Body of pancreas (tissue), 4 donors: ENCODE measurements at regions of chr10 and their contacts with region 1.

Region 1: GRCh38 chr10:61284222-61284890 is 168.8 kb downstream of the TMEM26 start:
- DNase-seq: peak in 1 of 4 donors; percentile 14
- ATAC-seq: peak; percentile 77
- H3K4me3 ChIP-seq: no peak overlapping the region
- H3K27ac ChIP-seq: no peak overlapping the region
- H3K4me1 ChIP-seq: no peaks in the 10 kb centered on the region
- H3K27me3 ChIP-seq: no peaks in the 10 kb centered on the region
- CTCF ChIP-seq: peak; percentile 55 to 84 (median 78)
- POLR2A ChIP-seq: no peak

Region 2: GRCh38 chr10:60281331-60281730 is 1003.0 kb before region 1 on chr10:
- intact Hi-C with region 1: no loop called
- DNase-seq: no peak
- ATAC-seq: no peak
- H3K4me3 ChIP-seq: no peak overlapping the region
- H3K27ac ChIP-seq: no peak overlapping the region
- H3K4me1 ChIP-seq: peaks cover 20% of the 10 kb centered on the region
- H3K27me3 ChIP-seq: no peaks in the 10 kb centered on the region
- CTCF ChIP-seq: no peak
- POLR2A ChIP-seq: no peak

Region 3: GRCh38 chr10:60816628-60817397 is 467.5 kb before region 1 on chr10:
- intact Hi-C with region 1: loop called (anchors 5 kb)
- DNase-seq: peak; percentile 47 to 74 (median 58)
- ATAC-seq: peak; percentile 89
- H3K4me3 ChIP-seq: no peak overlapping the region
- H3K27ac ChIP-seq: no peak overlapping the region
- H3K4me1 ChIP-seq: peaks cover 3% of the 10 kb centered on the region
- H3K27me3 ChIP-seq: no peaks in the 10 kb centered on the region
- CTCF ChIP-seq: peak; percentile 40 to 90 (median 80)
- POLR2A ChIP-seq: no peak

Region 4: GRCh38 chr10:61159253-61159652 is 125.1 kb before region 1 on chr10:
- intact Hi-C with region 1: loop called (anchors 10 kb)
- DNase-seq: no peak
- ATAC-seq: no peak
- H3K4me3 ChIP-seq: no peak overlapping the region
- H3K27ac ChIP-seq: no peak overlapping the region
- H3K4me1 ChIP-seq: peaks cover 8% of the 10 kb centered on the region
- H3K27me3 ChIP-seq: no peaks in the 10 kb centered on the region
- CTCF ChIP-seq: no peak
- POLR2A ChIP-seq: no peak